Activated CD4-positive, alpha-beta memory T cell treated with anti-CD3 and anti-CD28 coated beads for 36 hours (primary cell): ENCODE measurements at regions of chr6 and their contacts with region 1.

Region 1: GRCh38 chr6:161273752-161274487 is at the start of gene AGPAT4:
- DNase-seq: peak; percentile 69
- H3K4me3 Mint-ChIP-seq: peak within 1 kb of the TSS; percentile 82
- H3K27ac Mint-ChIP-seq: peak within 1 kb of the TSS; percentile 80
- H3K4me1 Mint-ChIP-seq: peaks cover 20% of the 10 kb centered on the region
- H3K27me3 Mint-ChIP-seq: peaks cover 2% of the 10 kb centered on the region
- total RNA-seq, gene AGPAT4: 4.7 to 5.6 TPM

Region 2: GRCh38 chr6:160978141-160978901 is 295.6 kb before region 1 on chr6:
- CTCF ChIA-PET with region 1: no interaction called
- POLR2A ChIA-PET with region 1: no interaction called
- intact Hi-C with region 1: no loop called
- DNase-seq: no peak
- H3K4me3 Mint-ChIP-seq: no peak overlapping the region
- H3K27ac Mint-ChIP-seq: no peak overlapping the region
- H3K4me1 Mint-ChIP-seq: no peaks in the 10 kb centered on the region
- H3K27me3 Mint-ChIP-seq: no peaks in the 10 kb centered on the region

Region 3: GRCh38 chr6:160992061-160992979 is 281.6 kb before region 1 on chr6:
- CTCF ChIA-PET with region 1: no interaction called
- POLR2A ChIA-PET with region 1: interaction called, 9 read pairs
- intact Hi-C with region 1: loop called (anchors 1 kb)
- DNase-seq: peak; percentile 45
- H3K4me3 Mint-ChIP-seq: peak overlapping the region; percentile 87
- H3K27ac Mint-ChIP-seq: peak overlapping the region; percentile 88
- H3K4me1 Mint-ChIP-seq: peaks cover 40% of the 10 kb centered on the region
- H3K27me3 Mint-ChIP-seq: peaks cover 2% of the 10 kb centered on the region

Region 4: GRCh38 chr6:161057103-161058091 is 216.5 kb before region 1 on chr6:
- CTCF ChIA-PET with region 1: no interaction called
- POLR2A ChIA-PET with region 1: no interaction called
- intact Hi-C with region 1: loop called (anchors 10 kb)
- DNase-seq: no peak
- H3K4me3 Mint-ChIP-seq: no peak overlapping the region
- H3K27ac Mint-ChIP-seq: no peak overlapping the region
- H3K4me1 Mint-ChIP-seq: peaks cover 30% of the 10 kb centered on the region
- H3K27me3 Mint-ChIP-seq: no peaks in the 10 kb centered on the region

Region 5: GRCh38 chr6:161079566-161080262 is 194.2 kb before region 1 on chr6:
- CTCF ChIA-PET with region 1: no interaction called
- POLR2A ChIA-PET with region 1: interaction called, 7 read pairs
- intact Hi-C with region 1: loop called (anchors 5 kb)
- DNase-seq: peak; percentile 89
- H3K4me3 Mint-ChIP-seq: peak overlapping the region; percentile 35
- H3K27ac Mint-ChIP-seq: no peak overlapping the region
- H3K4me1 Mint-ChIP-seq: peaks cover 6% of the 10 kb centered on the region
- H3K27me3 Mint-ChIP-seq: no peaks in the 10 kb centered on the region

Region 6: DNA sequence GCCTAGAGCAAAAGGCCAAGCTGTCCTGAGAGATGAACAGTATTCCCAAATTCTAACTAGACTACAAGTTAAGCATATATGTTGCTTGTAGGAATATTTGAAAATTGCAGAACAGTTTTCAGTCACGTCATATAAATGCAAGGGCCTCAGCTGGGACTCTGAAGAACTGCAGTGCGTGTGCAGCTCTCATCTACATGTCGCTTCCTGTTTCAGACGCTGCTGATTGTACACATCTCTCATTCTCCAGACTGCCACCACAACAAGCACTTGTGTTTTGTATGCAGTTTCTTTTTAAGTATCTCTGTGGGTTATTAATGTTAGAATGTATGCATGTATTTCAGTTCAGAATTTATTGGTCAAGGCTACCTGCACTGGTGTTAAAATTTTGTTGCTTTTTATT is 162.7 kb before region 1 on chr6:
- CTCF ChIA-PET with region 1: no interaction called
- POLR2A ChIA-PET with region 1: no interaction called
- intact Hi-C with region 1: loop called (anchors 10 kb)
- DNase-seq: peak; percentile 36
- H3K4me3 Mint-ChIP-seq: no peak overlapping the region
- H3K27ac Mint-ChIP-seq: peak overlapping the region; percentile 83
- H3K4me1 Mint-ChIP-seq: peaks cover 38% of the 10 kb centered on the region
- H3K27me3 Mint-ChIP-seq: no peaks in the 10 kb centered on the region

Region 7: GRCh38 chr6:161228921-161229591 is 44.9 kb before region 1 on chr6:
- CTCF ChIA-PET with region 1: no interaction called
- POLR2A ChIA-PET with region 1: interaction called, 9 read pairs
- intact Hi-C with region 1: loop called (anchors 1 kb)
- DNase-seq: no peak
- H3K4me3 Mint-ChIP-seq: no peak overlapping the region
- H3K27ac Mint-ChIP-seq: peak overlapping the region; percentile 71
- H3K4me1 Mint-ChIP-seq: peaks cover 47% of the 10 kb centered on the region
- H3K27me3 Mint-ChIP-seq: no peaks in the 10 kb centered on the region

Region 8: GRCh38 chr6:161235776-161236633 is 37.9 kb before region 1 on chr6:
- CTCF ChIA-PET with region 1: no interaction called
- POLR2A ChIA-PET with region 1: interaction called, 5 read pairs
- intact Hi-C with region 1: loop called (anchors 2 kb)
- DNase-seq: peak; percentile 15
- H3K4me3 Mint-ChIP-seq: no peak overlapping the region
- H3K27ac Mint-ChIP-seq: peak overlapping the region; percentile 56
- H3K4me1 Mint-ChIP-seq: peaks cover 29% of the 10 kb centered on the region
- H3K27me3 Mint-ChIP-seq: no peaks in the 10 kb centered on the region